ENCODE measurements at regions of chr20 and their contacts with region 1.

Region 1: GRCh38 chr20:49853640-49854039 is 41.0 kb downstream of the SLC9A8 start:
- DNase-seq: no peak
- ATAC-seq: no peak
- H3K4me3 ChIP-seq: no peak overlapping the region
- H3K27ac ChIP-seq: no peak overlapping the region
- H3K4me1 ChIP-seq: peaks cover 2 to 40% (median 25%) of the 10 kb centered on the region in 9 donors
- H3K27me3 ChIP-seq: no peaks in the 10 kb centered on the region
- CTCF ChIP-seq: no peak

Region 2: DNA sequence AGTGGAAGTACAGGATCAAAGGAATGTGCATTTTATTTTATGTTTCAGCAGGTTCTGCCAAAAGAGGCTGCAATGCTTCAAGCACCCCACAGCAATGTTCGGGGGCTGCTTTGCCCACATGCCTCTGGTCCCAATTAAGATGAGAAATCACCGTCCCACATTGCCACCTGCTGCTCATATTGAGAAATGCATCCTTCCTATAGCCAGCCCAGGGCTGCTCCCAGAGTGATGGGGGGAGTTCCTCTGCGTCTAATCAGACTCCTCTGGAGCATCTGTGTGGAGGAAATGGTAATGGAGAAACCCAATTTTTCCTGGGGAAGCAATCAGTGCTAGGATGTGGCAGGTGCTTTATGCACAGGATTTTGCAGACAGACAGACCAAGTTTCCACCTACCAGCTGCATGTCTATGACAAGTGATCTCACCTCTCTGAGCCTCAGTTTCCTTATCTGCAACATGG is 319.4 kb before region 1 on chr20:
- intact Hi-C with region 1: loop called in 1 of 10 experiments (anchors 10 kb)
- DNase-seq: peak in 1 of 2 donors; percentile 57
- ATAC-seq: peak in 7 of 8 donors; percentile 65 to 79 (median 70)
- H3K4me3 ChIP-seq: no peak overlapping the region
- H3K27ac ChIP-seq: no peak overlapping the region
- H3K4me1 ChIP-seq: peaks cover 0 to 8% (median 0%) of the 10 kb centered on the region in 9 donors
- H3K27me3 ChIP-seq: no peaks in the 10 kb centered on the region
- CTCF ChIP-seq: peak; percentile 54 to 90 (median 83)

Region 3: DNA sequence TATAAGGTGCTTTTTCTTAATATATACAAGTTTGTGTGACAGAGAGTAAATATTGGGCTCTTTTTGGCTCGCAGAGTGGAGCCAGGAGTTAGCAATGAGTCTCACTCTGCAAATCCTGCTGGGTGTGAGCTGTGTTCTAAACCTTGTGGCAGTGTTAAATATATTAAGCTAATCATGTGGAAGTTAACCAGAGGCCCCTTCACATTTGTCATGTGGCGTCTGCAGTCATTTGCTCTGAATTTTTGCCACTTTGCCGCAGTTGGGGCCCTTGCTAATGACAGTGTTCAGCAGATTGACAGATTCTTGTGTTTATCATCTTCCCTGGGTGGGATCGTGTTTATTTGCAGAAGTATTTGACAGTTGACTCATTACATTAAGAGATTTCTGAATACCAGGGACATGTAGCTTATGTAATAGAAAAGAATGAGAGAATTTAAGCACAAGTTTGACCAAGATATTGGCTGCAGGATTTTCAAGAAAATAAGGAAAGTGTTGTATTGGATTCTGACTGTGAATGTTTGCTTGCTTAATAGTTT is 23.8 kb after region 1 on chr20:
- intact Hi-C with region 1: no loop called
- DNase-seq: no peak
- ATAC-seq: no peak
- H3K4me3 ChIP-seq: no peak overlapping the region
- H3K27ac ChIP-seq: peak overlapping the region in 1 of 10 donors; percentile 29
- H3K4me1 ChIP-seq: peaks cover 0 to 17% (median 3%) of the 10 kb centered on the region in 9 donors
- H3K27me3 ChIP-seq: no peaks in the 10 kb centered on the region
- CTCF ChIP-seq: no peak

Region 4: DNA sequence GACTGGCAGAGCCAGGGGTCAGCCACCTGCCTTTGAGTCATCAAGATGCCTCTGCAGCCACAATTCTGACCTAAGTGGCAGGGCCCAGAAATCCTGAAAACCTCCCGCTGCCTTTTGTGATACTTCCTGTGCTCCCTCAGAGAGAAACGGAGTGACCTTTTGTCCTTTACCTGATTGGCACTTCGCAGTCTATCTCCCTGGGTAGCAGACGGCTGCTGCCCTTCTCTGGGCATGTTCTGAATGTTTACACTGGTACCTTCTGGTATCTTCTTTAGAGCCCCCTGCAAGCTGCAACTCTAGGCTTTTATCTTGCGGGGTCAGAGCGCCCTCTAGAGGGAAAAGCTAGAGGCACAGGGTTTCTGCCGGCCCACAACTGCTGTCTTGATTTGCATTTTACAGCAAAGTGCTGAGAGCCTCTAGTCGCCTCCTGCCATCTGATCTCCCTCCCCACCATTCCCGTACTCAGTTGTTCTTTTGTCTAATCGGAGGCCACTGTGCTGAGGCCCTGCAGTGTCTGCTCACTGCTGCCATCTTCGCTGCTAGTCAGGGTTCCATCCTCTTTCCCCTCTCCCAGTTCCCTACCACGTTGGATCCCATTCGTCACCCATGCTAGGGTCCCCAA is 34.8 kb after region 1 on chr20:
- intact Hi-C with region 1: loop called in 1 of 10 experiments (anchors 5 kb)
- DNase-seq: peak in 1 of 2 donors; percentile 38
- ATAC-seq: peak in 5 of 8 donors; percentile 7 to 32 (median 17)
- H3K4me3 ChIP-seq: no peak overlapping the region
- H3K27ac ChIP-seq: peak overlapping the region in 9 of 10 donors; percentile 3 to 79 (median 71)
- H3K4me1 ChIP-seq: peaks cover 26 to 69% (median 64%) of the 10 kb centered on the region in 9 donors
- H3K27me3 ChIP-seq: no peaks in the 10 kb centered on the region
- CTCF ChIP-seq: peak; percentile 48 to 81 (median 76)

Region 5: GRCh38 chr20:49928401-49929141 is 74.9 kb after region 1 on chr20:
- intact Hi-C with region 1: loop called in 1 of 10 experiments (anchors 10 kb)
- DNase-seq: peak; percentile 72 to 77
- ATAC-seq: peak; percentile 76 to 89 (median 86)
- H3K4me3 ChIP-seq: no peak overlapping the region
- H3K27ac ChIP-seq: peak overlapping the region in 2 of 10 donors; percentile 6 to 48
- H3K4me1 ChIP-seq: peaks cover 0 to 19% (median 0%) of the 10 kb centered on the region in 9 donors
- H3K27me3 ChIP-seq: no peaks in the 10 kb centered on the region
- CTCF ChIP-seq: peak; percentile 87 to 95 (median 93)

Measured in heart right ventricle (tissue), 16 donors.